PC-9 (cell line): ENCODE measurements at regions of chr1 and their contacts with region 1.

Region 1: GRCh38 chr1:38433084-38433722 is 386.6 kb upstream of the POU3F1 start:
- DNase-seq: no peak
- H3K4me3 ChIP-seq: no peak overlapping the region
- H3K27ac ChIP-seq: no peak overlapping the region
- H3K4me1 ChIP-seq: no peaks in the 10 kb centered on the region
- H3K27me3 ChIP-seq: peaks cover 83% of the 10 kb centered on the region
- CTCF ChIP-seq: no peak

Region 2: GRCh38 chr1:38512024-38512767 is 79.0 kb after region 1 on chr1:
- CTCF ChIA-PET with region 1: interaction called, 11 read pairs
- POLR2A ChIA-PET with region 1: no interaction called
- intact Hi-C with region 1: no loop called
- DNase-seq: no peak
- H3K4me3 ChIP-seq: no peak overlapping the region
- H3K27ac ChIP-seq: no peak overlapping the region
- H3K4me1 ChIP-seq: no peaks in the 10 kb centered on the region
- H3K27me3 ChIP-seq: peaks cover 69% of the 10 kb centered on the region
- CTCF ChIP-seq: no peak